ENCODE measurements at regions of chr5 and their contacts with region 1.

Region 1: DNA sequence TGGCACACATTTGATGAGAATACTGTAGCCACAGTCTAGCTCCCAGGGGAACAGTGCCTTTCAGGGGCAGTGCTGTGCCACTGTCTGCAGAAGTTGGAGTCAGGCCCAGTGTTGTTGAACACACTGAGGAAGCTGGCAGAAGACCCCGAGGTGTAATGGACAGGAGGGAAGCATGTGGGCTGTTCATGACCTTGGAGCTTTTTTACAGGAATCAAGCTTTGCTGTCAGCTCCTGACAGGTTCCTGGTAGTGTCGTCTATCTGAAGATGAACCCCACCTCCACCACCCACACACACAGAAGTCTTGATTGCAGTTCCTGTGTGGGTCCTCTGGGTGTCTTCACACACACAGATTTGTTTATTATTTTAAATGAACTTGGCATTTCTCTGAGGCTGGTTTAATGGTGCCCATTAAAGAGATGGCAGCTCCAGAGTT is 40.3 kb upstream of the TNFAIP8 start:
- DNase-seq: no peak
- ATAC-seq: peak; percentile 78
- H3K4me3 Mint-ChIP-seq: peak overlapping the region; percentile 55
- H3K27ac Mint-ChIP-seq: peak overlapping the region; percentile 82
- H3K4me1 Mint-ChIP-seq: peaks cover 92% of the 10 kb centered on the region
- H3K27me3 Mint-ChIP-seq: no peaks in the 10 kb centered on the region
- CTCF ChIP-seq: no peak

Region 2: GRCh38 chr5:119274767-119275130 is 40.8 kb before region 1 on chr5:
- CTCF ChIA-PET with region 1: interaction called, 20 read pairs
- POLR2A ChIA-PET with region 1: interaction called, 20 read pairs
- intact Hi-C with region 1: loop called (anchors 1 kb)
- DNase-seq: no peak
- ATAC-seq: peak; percentile 42
- H3K4me3 Mint-ChIP-seq: peak overlapping the region; percentile 78
- H3K27ac Mint-ChIP-seq: peak overlapping the region; percentile 89
- H3K4me1 Mint-ChIP-seq: peaks cover 97% of the 10 kb centered on the region
- H3K27me3 Mint-ChIP-seq: no peaks in the 10 kb centered on the region
- CTCF ChIP-seq: no peak

Region 3: DNA sequence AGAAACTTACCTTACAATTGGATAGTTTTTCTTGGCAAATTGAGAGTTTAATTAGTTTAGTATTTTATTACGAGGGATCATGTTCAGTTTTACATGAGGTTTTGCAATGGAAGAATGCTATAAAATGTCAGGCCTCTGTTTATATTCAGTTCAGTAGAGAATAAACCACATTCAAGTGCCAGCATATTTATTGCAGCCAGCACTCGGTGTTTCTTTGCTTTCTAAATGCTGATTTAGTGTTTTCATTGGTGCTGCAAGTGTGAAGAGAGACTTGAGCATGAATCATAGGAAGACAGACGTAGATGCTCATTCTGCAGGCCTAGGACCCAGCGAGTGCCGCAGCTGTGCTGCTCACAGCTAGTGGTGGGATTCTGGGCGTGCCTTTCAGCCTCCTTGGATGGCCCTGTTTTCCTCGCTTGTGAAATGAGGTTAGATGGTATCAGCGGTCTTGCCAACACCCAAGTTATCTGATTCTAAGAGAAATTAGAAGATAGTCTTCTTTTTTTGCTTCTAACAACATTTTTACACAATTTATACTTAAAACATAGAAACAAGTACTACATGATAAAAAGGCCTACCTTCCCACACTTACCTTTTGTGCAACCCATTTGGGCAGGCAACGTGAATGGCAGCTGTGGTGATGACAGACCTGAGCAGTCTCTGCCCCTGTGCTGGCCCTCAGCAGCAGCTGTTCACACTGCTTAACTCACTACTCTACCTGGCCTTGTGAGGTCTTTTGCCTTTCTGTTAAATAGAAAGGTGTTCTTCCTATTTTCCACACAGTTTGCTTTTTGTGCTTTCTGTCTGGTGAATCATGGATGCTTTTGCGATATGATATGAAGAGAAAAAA is 13.4 kb after region 1 on chr5:
- CTCF ChIA-PET with region 1: no interaction called
- POLR2A ChIA-PET with region 1: interaction called, 5 read pairs
- intact Hi-C with region 1: loop called (anchors 1 kb)
- DNase-seq: no peak
- ATAC-seq: no peak
- H3K4me3 Mint-ChIP-seq: no peak overlapping the region
- H3K27ac Mint-ChIP-seq: peak overlapping the region; percentile 69
- H3K4me1 Mint-ChIP-seq: peaks cover 94% of the 10 kb centered on the region
- H3K27me3 Mint-ChIP-seq: no peaks in the 10 kb centered on the region
- CTCF ChIP-seq: no peak

Region 4: DNA sequence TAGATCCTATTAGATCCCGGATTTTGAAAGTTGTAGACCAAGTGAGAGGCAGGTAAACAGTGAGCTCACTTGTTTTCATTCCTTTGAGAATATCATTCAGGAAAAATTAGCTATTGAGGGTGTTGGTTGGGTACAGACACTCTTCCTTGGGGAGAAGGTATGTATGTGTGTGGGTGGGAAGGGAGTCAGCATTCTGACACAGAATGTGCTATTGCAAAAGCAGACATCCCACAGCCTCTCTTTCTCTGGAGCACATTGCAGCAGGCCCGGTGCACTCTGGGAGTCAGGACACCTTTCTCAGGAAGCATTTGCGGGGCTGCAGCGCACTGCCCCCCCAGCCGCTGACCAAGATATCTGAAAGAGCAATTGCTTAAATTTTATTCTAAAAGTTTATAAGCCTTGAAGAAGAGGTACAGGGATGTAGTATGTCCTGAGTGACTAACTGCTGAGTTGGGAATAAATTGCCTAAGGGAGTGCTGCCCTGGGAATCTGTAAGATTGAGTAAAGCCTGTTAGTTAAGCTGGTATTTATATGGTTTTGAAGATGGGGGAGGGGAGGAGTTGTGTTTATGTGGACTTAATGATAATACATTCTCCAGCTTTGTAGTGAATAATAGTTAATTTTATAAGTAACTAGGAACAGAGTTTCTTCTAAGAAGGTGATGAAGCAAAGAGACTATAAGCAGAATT is 45.5 kb after region 1 on chr5:
- CTCF ChIA-PET with region 1: interaction called, 28 read pairs
- POLR2A ChIA-PET with region 1: interaction called, 18 read pairs
- intact Hi-C with region 1: no loop called
- DNase-seq: no peak
- ATAC-seq: no peak
- H3K4me3 Mint-ChIP-seq: peak overlapping the region; percentile 100
- H3K27ac Mint-ChIP-seq: peak overlapping the region; percentile 75
- H3K4me1 Mint-ChIP-seq: peaks cover 85% of the 10 kb centered on the region
- H3K27me3 Mint-ChIP-seq: no peaks in the 10 kb centered on the region
- CTCF ChIP-seq: no peak

Region 5: DNA sequence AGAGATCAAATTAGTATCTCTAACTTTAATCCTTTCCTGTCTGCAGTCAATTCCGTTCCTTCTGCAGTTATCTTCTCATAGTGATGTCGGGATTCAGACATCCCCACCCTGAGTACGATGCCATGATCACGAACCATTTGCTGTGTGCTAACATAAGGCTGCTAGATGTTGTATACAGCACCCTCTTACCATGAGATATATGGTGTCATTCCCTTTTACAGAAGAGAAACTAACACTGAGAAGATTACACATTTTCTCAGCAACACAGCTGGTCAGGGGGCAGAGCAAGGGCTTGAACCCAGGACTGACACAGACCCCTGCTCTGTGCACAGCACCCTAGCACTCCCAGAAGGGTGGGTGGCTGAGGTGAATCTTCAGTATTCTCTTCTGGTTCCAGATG is 89.9 kb after region 1 on chr5:
- CTCF ChIA-PET with region 1: interaction called, 98 read pairs
- POLR2A ChIA-PET with region 1: interaction called, 9 read pairs
- intact Hi-C with region 1: no loop called
- DNase-seq: no peak
- ATAC-seq: no peak
- H3K4me3 Mint-ChIP-seq: no peak overlapping the region
- H3K27ac Mint-ChIP-seq: peak overlapping the region; percentile 76
- H3K4me1 Mint-ChIP-seq: peaks cover 74% of the 10 kb centered on the region
- H3K27me3 Mint-ChIP-seq: no peaks in the 10 kb centered on the region
- CTCF ChIP-seq: no peak

Measured in activated B cell treated with CpG ODN at 0.5 μM for 24 hours (primary cell).